Psoas muscle (tissue), 8 donors: ENCODE measurements at regions of chr14 and their contacts with region 1.

Region 1: DNA sequence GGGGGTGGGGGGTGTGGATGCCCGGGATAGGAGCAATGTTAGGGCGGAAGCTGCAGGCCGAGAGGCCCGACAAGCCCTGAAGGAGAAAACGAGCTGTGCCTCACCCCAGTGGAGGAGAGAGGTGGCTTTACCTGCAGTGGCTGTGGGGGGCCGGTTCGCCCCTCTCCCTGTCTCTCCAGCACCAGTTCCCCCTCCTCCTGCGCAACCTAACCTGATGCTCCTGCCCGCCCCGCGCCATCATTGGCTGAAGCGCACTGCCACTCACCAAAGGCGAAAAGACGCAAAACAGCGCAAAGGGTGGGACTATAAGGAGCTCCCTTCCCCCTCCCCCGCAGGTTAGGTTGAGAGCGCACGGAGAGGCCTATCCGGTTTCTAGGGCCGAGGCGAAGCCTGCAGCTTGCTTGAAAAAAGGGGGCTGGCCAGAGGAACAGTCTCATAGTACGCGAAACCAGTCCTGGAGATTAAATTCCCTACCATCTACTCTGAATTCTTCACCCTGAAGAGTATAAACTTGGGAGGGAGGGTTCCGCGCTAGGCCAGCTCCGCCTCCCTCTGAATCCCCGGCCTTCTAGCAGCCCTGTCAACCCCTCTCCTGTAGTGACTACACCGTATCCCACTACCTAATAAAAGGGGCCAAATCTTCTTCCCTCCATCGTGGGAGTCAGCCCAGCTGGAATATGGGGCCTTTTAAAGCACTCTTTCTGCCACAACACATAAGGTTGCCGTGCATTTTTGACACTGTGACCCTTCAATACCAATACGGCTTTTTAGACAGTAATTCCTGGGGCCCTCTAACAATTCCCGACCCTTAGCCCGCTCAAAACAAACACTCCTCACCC is 18.6 kb downstream of the CHD8 start:
- DNase-seq: peak; percentile 99 to 100
- ATAC-seq: peak; percentile 99 to 100 (median 100)
- H3K4me3 ChIP-seq: peak overlapping the region; percentile 84
- H3K27ac ChIP-seq: peak overlapping the region; percentile 89
- H3K4me1 ChIP-seq: peaks cover 17% of the 10 kb centered on the region
- H3K27me3 ChIP-seq: no peaks in the 10 kb centered on the region
- CTCF ChIP-seq: no peak

Region 2: GRCh38 chr14:21367582-21368144 is 69.6 kb before region 1 on chr14:
- intact Hi-C with region 1: no loop called
- DNase-seq: no peak
- ATAC-seq: no peak
- H3K4me3 ChIP-seq: no peak overlapping the region
- H3K27ac ChIP-seq: no peak overlapping the region
- H3K4me1 ChIP-seq: no peaks in the 10 kb centered on the region
- H3K27me3 ChIP-seq: no peaks in the 10 kb centered on the region
- CTCF ChIP-seq: no peak

Region 3: DNA sequence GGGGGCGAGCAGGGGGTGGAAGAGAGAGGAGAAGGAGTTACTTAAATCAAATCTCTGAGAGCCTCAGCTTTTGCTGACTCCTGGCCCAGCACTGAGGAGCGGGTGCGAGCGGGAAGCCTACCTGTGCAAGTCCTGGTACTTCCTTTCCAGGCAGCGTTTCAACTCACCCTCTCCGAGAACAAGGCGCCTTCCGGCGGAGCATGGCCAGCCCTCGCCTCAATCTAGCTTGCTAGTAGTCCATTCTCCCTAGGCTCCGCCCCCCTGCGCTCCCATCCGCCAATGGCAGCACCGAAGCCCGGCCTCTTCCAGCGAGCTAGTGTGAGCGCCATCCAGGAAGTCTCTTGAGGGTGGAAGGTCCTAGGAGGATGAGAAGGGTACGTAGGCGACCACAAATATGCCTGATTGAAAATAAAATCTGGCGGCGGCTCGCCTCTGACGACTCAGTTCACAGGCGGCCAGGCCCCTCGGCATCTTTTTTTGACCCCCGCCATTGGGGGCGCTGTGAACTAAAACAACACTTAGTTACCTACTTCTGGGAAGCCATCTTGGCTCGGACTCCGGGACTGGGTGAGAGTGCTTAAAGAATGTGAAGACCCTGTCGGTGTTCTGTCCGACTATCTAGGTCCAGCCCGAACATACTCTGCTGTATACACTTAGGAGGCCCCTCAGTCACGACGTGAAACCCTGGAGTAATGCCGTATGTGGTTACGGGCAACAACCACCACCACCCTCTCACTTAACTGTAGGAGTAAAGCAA is 18.8 kb after region 1 on chr14 and contains the start of gene CHD8:
- intact Hi-C with region 1: loop called (anchors 2 kb)
- DNase-seq: peak; percentile 100
- ATAC-seq: peak; percentile 99 to 100 (median 100)
- H3K4me3 ChIP-seq: peak within 1 kb of the TSS; percentile 95
- H3K27ac ChIP-seq: peak within 1 kb of the TSS; percentile 97
- H3K4me1 ChIP-seq: peaks cover 17% of the 10 kb centered on the region
- H3K27me3 ChIP-seq: no peaks in the 10 kb centered on the region
- CTCF ChIP-seq: peak; percentile 61
- total RNA-seq, gene CHD8: 27.1 to 40.1 (median 36.1) TPM

Region 4: DNA sequence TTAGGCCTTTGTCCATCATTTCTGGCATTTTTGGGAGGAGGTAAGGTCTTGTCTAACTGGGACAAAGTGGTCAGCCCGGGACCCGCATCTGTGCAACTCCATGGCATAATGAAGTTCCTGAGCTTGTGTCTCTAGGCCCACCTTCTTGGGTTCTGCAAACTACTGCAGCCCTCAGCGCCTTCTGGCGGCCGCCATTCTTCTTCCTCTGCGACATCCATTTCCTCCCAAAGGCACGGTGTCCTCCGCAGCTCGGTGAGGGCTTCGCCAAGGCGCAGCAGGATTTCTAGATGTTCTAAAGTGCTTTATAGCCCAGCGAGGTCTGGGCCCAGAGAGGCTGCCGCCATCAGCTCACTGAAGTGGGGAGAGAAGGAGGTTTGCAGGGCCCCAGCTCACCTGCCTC is 370.7 kb after region 1 on chr14:
- intact Hi-C with region 1: no loop called
- DNase-seq: no peak
- ATAC-seq: no peak
- H3K4me3 ChIP-seq: no peak overlapping the region
- H3K27ac ChIP-seq: no peak overlapping the region
- H3K4me1 ChIP-seq: no peaks in the 10 kb centered on the region
- H3K27me3 ChIP-seq: no peaks in the 10 kb centered on the region
- CTCF ChIP-seq: no peak